ENCODE measurements at regions of chr3 and their contacts with region 1.

Region 1: GRCh38 chr3:90091204-90091924 is 983.9 kb downstream of the EPHA3 start:
- DNase-seq: peak; percentile 11
- H3K4me3 ChIP-seq: no peak overlapping the region
- H3K27ac ChIP-seq: no peak overlapping the region
- H3K4me1 ChIP-seq: no peaks in the 10 kb centered on the region
- CTCF ChIP-seq: peak; percentile 70

Region 2: DNA sequence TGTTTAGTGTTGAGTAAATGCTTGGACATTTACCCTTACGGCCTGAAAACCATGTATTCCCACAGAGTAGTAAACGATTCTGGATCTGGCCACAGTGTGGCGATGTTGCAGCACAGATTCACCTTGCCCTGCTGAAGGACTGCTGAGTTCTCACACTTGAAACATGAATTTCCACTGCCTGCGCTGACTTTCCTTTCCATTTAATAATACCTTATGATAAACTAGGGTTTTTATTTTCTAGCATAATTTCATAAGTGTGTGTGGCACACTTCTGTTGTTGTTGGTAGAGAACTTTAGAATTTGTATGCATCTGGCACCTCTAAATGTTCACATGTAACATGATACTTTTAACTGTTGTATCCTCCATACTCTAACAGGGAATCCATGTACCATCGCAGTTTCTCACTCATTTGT is 1887.7 kb before region 1 on chr3:
- CTCF ChIA-PET with region 1: no interaction called
- POLR2A ChIA-PET with region 1: no interaction called
- intact Hi-C with region 1: loop called (anchors 10 kb)
- DNase-seq: peak; percentile 67
- H3K4me3 ChIP-seq: no peak overlapping the region
- H3K27ac ChIP-seq: no peak overlapping the region
- H3K4me1 ChIP-seq: no peaks in the 10 kb centered on the region
- CTCF ChIP-seq: peak; percentile 98

Region 3: GRCh38 chr3:90055666-90056065 is 35.7 kb before region 1 on chr3:
- CTCF ChIA-PET with region 1: no interaction called
- POLR2A ChIA-PET with region 1: no interaction called
- intact Hi-C with region 1: no loop called
- DNase-seq: no peak
- H3K4me3 ChIP-seq: no peak overlapping the region
- H3K27ac ChIP-seq: no peak overlapping the region
- H3K4me1 ChIP-seq: no peaks in the 10 kb centered on the region
- CTCF ChIP-seq: no peak

Region 4: DNA sequence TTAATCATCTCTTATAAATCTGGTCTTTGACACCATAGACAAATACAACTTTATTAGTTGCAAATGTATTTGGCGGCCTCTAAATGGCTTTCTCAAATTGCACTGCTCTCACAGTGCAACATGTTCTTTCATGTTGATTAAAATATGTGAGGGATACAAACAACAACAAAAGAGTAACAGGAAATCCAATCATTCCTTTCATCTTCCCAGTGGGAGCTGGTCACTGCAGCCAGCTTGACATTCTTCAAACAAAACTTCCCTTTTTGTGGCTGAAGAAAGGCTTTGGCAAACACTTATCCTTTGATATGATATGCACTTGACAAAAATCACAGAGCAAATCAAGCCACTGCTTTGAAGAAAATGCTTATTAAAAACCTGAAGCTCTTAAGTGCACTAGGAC is 10.4 kb before region 1 on chr3:
- CTCF ChIA-PET with region 1: no interaction called
- POLR2A ChIA-PET with region 1: no interaction called
- intact Hi-C with region 1: loop called (anchors 1 kb)
- DNase-seq: no peak
- H3K4me3 ChIP-seq: no peak overlapping the region
- H3K27ac ChIP-seq: no peak overlapping the region
- H3K4me1 ChIP-seq: no peaks in the 10 kb centered on the region
- CTCF ChIP-seq: no peak

Region 5: DNA sequence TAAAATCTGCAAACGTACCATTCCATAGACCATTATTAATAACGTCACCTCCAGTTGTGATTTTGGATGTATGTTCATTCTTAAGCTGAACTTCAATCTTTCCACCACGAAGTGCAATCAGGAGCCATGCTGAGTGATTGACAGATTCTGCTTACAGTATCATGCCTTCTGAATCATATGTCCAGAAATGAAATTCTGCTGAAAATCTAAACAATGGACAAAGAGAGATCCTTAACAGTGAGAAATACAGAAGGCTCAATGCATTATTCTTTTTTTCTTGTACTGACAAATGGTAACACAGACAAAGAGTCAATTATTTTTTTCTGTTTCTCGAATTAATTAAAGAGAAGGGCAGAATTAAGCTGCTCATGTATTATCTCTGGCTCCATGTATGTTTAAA is 130.5 kb after region 1 on chr3:
- CTCF ChIA-PET with region 1: no interaction called
- POLR2A ChIA-PET with region 1: no interaction called
- intact Hi-C with region 1: no loop called
- DNase-seq: no peak
- H3K4me3 ChIP-seq: no peak overlapping the region
- H3K27ac ChIP-seq: no peak overlapping the region
- H3K4me1 ChIP-seq: no peaks in the 10 kb centered on the region
- CTCF ChIP-seq: no peak